ENCODE measurements at regions of chr5 and their contacts with region 1.

Region 1: GRCh38 chr5:55226027-55226933 is 835 bp downstream of the MCIDAS start:
- DNase-seq: no peak
- ATAC-seq: peak; percentile 82
- H3K4me3 ChIP-seq: peak overlapping the region; percentile 58 to 70
- H3K27ac ChIP-seq: peak overlapping the region; percentile 60
- H3K4me1 ChIP-seq: peaks cover 13% of the 10 kb centered on the region
- H3K27me3 ChIP-seq: peaks cover 3% of the 10 kb centered on the region; the same call in 1 of the 2 replicates
- CTCF ChIP-seq: peak; percentile 91

Region 2: DNA sequence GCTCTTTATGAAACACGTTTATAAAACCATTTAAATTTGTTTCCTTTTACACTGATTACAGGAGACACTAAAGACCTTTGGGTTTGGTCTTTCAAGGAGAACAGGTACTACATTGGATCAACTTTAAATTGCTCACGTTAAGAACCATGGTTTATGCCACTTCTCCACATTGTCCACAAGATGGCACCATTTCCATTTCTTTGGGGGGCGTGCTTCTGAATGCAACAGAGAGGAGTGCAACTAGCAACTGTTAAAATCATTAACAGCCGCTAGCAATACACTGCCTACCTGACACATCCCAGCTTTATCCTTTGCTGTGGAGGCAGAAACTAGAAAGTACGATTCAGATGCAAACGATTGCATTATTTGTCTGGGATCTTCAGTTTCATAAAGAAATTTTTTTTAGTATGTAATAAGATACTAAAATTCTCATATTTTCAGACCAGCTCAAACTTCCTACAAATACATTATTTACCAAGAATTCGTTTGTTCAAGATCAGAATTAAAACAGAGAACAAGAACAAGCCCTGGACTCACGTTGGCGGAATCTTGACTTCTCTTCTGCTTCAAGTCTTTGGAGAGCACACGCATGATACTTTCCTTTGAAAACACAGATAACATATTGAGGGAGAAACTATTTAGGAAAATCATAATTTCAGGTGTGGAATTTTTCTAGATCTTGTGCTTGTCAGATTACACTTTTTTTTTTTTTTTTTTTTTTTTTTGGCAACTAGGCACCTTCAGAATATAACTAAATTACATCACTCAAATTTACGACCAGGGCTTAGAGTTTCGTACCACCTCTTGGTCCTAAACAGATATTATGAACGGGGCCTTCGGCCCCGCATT is 54.0 kb before region 1 on chr5:
- CTCF ChIA-PET with region 1: interaction called, 4 read pairs
- POLR2A ChIA-PET with region 1: interaction called, 6 read pairs
- in situ Hi-C with region 1: no loop called
- intact Hi-C with region 1: loop called (anchors 2 kb)
- DNase-seq: peak; percentile 65
- ATAC-seq: peak; percentile 62
- H3K4me3 ChIP-seq: peak overlapping the region; percentile 48 to 83
- H3K27ac ChIP-seq: no peak overlapping the region
- H3K4me1 ChIP-seq: peaks cover 23% of the 10 kb centered on the region
- H3K27me3 ChIP-seq: no peaks in the 10 kb centered on the region
- CTCF ChIP-seq: peak; percentile 83